Heart right ventricle (tissue), 16 donors: ENCODE measurements at regions of chr21 and their contacts with region 1.

Region 1: GRCh38 chr21:46458315-46459023 is at the start of gene DIP2A:
- DNase-seq: peak; percentile 95 to 96
- ATAC-seq: peak; percentile 94 to 98 (median 97)
- H3K4me3 ChIP-seq: peak within 1 kb of the TSS; percentile 73 to 99 (median 94)
- H3K27ac ChIP-seq: peak within 1 kb of the TSS; percentile 94 to 98 (median 97)
- H3K4me1 ChIP-seq: peaks cover 6 to 82% (median 67%) of the 10 kb centered on the region in 9 donors
- H3K27me3 ChIP-seq: no peaks in the 10 kb centered on the region
- CTCF ChIP-seq: peak in 2 of 9 donors; percentile 5 to 9
- total RNA-seq, gene DIP2A: 19.7 to 24.9 (median 22.9) TPM

Region 2: GRCh38 chr21:46356494-46357334 is 101.8 kb before region 1 on chr21:
- intact Hi-C with region 1: no loop called
- DNase-seq: no peak
- ATAC-seq: peak in 3 of 8 donors; percentile 5 to 12 (median 11)
- H3K4me3 ChIP-seq: no peak overlapping the region
- H3K27ac ChIP-seq: no peak overlapping the region
- H3K4me1 ChIP-seq: no peaks in the 10 kb centered on the region
- H3K27me3 ChIP-seq: no peaks in the 10 kb centered on the region
- CTCF ChIP-seq: no peak

Region 3: DNA sequence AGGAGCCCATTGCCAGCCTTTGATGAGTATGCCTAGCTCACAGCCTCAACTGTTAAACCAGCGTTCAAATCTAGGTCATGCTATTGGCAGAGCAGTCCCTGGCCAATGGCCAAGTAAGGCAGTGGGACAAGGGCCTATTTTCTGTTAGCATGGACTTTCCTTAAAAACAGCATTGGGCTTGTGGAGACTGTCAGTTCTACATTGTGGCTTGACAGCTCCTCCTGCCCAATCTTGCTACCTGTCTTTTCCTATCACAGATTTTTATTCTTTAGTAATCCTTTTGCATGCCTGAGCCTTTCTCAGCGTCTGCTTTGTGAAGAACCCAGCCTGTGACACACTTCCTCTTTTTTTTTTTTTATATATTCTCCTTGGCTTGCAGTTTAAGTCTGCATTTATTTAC is 56.6 kb after region 1 on chr21:
- intact Hi-C with region 1: loop called in 1 of 10 experiments (anchors 5 kb)
- DNase-seq: peak; percentile 42 to 62
- ATAC-seq: peak in 6 of 8 donors; percentile 43 to 84 (median 73)
- H3K4me3 ChIP-seq: no peak overlapping the region
- H3K27ac ChIP-seq: peak overlapping the region in 1 of 10 donors; percentile 64
- H3K4me1 ChIP-seq: peaks cover 2 to 30% (median 16%) of the 10 kb centered on the region in 9 donors
- H3K27me3 ChIP-seq: no peaks in the 10 kb centered on the region
- CTCF ChIP-seq: no peak